ENCODE measurements at regions of chr13 and their contacts with region 1.

Region 1: GRCh38 chr13:75694722-75695121 is 58.6 kb downstream of the LMO7 start:
- DNase-seq: no peak
- H3K4me3 ChIP-seq: no peak overlapping the region
- CTCF ChIP-seq: no peak

Region 2: DNA sequence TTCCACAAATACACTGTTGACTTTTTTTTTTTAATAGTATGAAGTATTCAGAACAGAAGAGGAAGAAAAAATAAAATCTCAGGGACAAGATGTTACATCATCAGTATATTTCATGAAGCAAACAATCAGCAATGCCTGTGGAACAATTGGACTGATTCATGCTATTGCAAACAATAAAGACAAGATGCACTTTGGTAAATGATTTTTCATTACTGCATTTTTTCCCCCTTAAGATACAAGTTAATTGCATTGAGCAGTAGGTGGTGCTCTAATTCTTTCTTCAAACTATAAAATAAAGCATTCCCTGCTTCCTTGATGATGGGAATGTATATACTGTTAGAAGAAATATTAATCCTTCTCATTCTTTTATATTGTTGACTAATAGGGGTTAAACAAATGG is 128.1 kb before region 1 on chr13:
- CTCF ChIA-PET with region 1: interaction called, 27 read pairs
- POLR2A ChIA-PET with region 1: no interaction called
- DNase-seq: no peak
- H3K4me3 ChIP-seq: no peak overlapping the region
- CTCF ChIP-seq: peak; percentile 25

Region 3: GRCh38 chr13:75621147-75621546 is 73.6 kb before region 1 on chr13:
- CTCF ChIA-PET with region 1: no interaction called
- POLR2A ChIA-PET with region 1: no interaction called
- DNase-seq: peak; percentile 81
- H3K4me3 ChIP-seq: no peak overlapping the region
- CTCF ChIP-seq: no peak

Region 4: GRCh38 chr13:75704579-75705320 is 10.0 kb after region 1 on chr13:
- CTCF ChIA-PET with region 1: interaction called, 94 read pairs
- POLR2A ChIA-PET with region 1: no interaction called
- DNase-seq: peak; percentile 67
- H3K4me3 ChIP-seq: no peak overlapping the region
- CTCF ChIP-seq: no peak

Region 5: DNA sequence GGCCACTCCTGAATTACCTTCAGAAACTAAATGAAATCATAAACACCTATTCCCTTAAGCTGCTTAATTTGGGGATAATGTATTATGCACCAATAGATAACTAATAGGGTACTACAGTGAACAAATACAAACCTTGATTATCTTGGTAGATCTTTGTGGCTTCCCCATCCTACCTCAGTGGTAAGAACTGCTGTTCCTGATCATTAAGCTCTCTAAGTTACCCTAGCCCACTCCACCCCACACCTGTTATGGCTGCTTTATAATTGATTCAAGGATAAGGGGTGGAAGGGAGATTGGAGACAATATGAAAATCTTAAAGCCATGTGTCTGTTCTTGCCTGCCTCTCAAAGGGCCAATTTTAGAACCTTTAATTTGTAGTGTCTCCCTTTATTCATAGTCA is 62.6 kb after region 1 on chr13:
- CTCF ChIA-PET with region 1: interaction called, 10 read pairs
- POLR2A ChIA-PET with region 1: no interaction called
- DNase-seq: no peak
- H3K4me3 ChIP-seq: no peak overlapping the region
- CTCF ChIP-seq: no peak

Region 6: GRCh38 chr13:75836441-75836840 is 141.7 kb after region 1 on chr13:
- CTCF ChIA-PET with region 1: interaction called, 30 read pairs
- POLR2A ChIA-PET with region 1: no interaction called
- DNase-seq: no peak
- H3K4me3 ChIP-seq: no peak overlapping the region
- CTCF ChIP-seq: no peak

Region 7: GRCh38 chr13:75850916-75851315 is 156.2 kb after region 1 on chr13:
- CTCF ChIA-PET with region 1: interaction called, 33 read pairs
- POLR2A ChIA-PET with region 1: no interaction called
- DNase-seq: no peak
- H3K4me3 ChIP-seq: no peak overlapping the region
- CTCF ChIP-seq: no peak

Measured in AG04449 (cell line).